CD4-positive, alpha-beta memory T cell (primary cell): ENCODE measurements at regions of chr3 and their contacts with region 1.

Region 1: GRCh38 chr3:152376351-152377183 is 107.8 kb downstream of the MBNL1 start:
- DNase-seq: no peak
- H3K4me3 ChIP-seq: no peak overlapping the region
- H3K4me3 Mint-ChIP-seq: peak overlapping the region in 4 of 8 donors; percentile 27 to 66 (median 42)
- H3K27ac ChIP-seq: no peak overlapping the region
- H3K27ac Mint-ChIP-seq: peak overlapping the region in 6 of 7 donors; percentile 6 to 86 (median 50)
- H3K4me1 ChIP-seq: peaks cover 90% of the 10 kb centered on the region
- H3K4me1 Mint-ChIP-seq: peaks cover 58 to 89% (median 70%) of the 10 kb centered on the region in 4 donors
- H3K27me3 ChIP-seq: no peaks in the 10 kb centered on the region
- H3K27me3 Mint-ChIP-seq: no peaks in the 10 kb centered on the region

Region 2: GRCh38 chr3:152331018-152331541 is 45.5 kb before region 1 on chr3:
- CTCF ChIA-PET with region 1: no interaction called
- POLR2A ChIA-PET with region 1: interaction called, 5 read pairs
- intact Hi-C with region 1: loop called (anchors 5 kb)
- DNase-seq: no peak
- H3K4me3 ChIP-seq: no peak overlapping the region
- H3K4me3 Mint-ChIP-seq: peak overlapping the region in 6 of 8 donors; percentile 20 to 76 (median 32)
- H3K27ac ChIP-seq: peak overlapping the region; percentile 28
- H3K27ac Mint-ChIP-seq: peak overlapping the region; percentile 35 to 92 (median 79)
- H3K4me1 ChIP-seq: peaks cover 96% of the 10 kb centered on the region
- H3K4me1 Mint-ChIP-seq: peaks cover 59 to 90% (median 75%) of the 10 kb centered on the region in 4 donors
- H3K27me3 ChIP-seq: no peaks in the 10 kb centered on the region
- H3K27me3 Mint-ChIP-seq: no peaks in the 10 kb centered on the region

Region 3: DNA sequence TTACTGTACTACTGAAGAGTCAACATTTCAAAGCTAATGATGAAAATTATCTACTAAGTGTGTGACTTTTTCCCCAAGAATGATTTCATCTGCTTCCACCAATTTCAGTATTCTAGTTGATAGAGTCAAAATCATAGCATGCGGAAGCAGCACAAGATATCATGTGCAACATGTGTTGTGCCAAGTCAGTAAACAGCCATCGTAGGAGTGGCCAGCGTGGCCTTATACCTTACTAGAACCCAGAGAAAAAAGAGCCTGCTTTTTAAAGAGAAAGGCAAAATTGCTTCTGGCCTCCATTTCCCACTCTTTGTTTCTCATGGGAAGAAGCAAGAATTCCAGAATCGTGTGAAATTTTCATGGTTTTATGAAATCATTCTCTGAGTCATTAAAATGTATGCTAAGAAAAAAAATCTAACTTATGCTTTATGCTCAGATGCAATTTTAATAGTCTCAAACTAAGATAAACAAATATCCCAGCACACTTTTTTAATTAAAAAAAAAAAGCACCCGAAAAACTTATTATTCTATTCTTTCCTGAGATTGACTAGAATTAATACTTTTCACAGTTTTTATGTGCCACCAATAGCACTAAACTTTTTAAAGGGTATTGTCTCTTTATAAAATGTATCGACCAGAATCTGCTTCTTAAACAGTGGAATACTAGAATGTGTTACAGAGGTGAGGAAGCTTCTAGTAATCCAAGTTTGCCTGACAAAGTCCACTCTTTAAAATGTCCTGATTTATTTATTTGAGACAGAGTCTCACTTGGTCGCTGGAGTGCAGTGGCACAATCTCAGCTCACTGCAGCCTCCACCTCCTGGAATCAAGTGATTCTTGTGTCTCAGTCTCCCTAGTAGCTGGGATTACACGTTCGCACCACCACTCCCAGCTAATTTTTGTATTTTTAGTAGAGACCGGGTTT is 20.6 kb before region 1 on chr3:
- CTCF ChIA-PET with region 1: no interaction called
- POLR2A ChIA-PET with region 1: interaction called, 6 read pairs
- intact Hi-C with region 1: loop called (anchors 2 kb)
- DNase-seq: no peak
- H3K4me3 ChIP-seq: no peak overlapping the region
- H3K4me3 Mint-ChIP-seq: peak overlapping the region in 2 of 8 donors; percentile 33 to 61
- H3K27ac ChIP-seq: no peak overlapping the region
- H3K27ac Mint-ChIP-seq: peak overlapping the region in 6 of 7 donors; percentile 28 to 70 (median 56)
- H3K4me1 ChIP-seq: peaks cover 80% of the 10 kb centered on the region
- H3K4me1 Mint-ChIP-seq: peaks cover 50 to 78% (median 66%) of the 10 kb centered on the region in 4 donors
- H3K27me3 ChIP-seq: no peaks in the 10 kb centered on the region
- H3K27me3 Mint-ChIP-seq: no peaks in the 10 kb centered on the region

Region 4: GRCh38 chr3:152390647-152391046 is 14.1 kb after region 1 on chr3:
- CTCF ChIA-PET with region 1: interaction called, 3 read pairs
- POLR2A ChIA-PET with region 1: interaction called, 4 read pairs
- intact Hi-C with region 1: loop called (anchors 2 kb)
- DNase-seq: no peak
- H3K4me3 ChIP-seq: no peak overlapping the region
- H3K4me3 Mint-ChIP-seq: peak overlapping the region in 1 of 8 donors; percentile 35
- H3K27ac ChIP-seq: no peak overlapping the region
- H3K27ac Mint-ChIP-seq: peak overlapping the region; percentile 0 to 83 (median 58)
- H3K4me1 ChIP-seq: peaks cover 71% of the 10 kb centered on the region
- H3K4me1 Mint-ChIP-seq: peaks cover 43 to 87% (median 64%) of the 10 kb centered on the region in 4 donors
- H3K27me3 ChIP-seq: no peaks in the 10 kb centered on the region
- H3K27me3 Mint-ChIP-seq: no peaks in the 10 kb centered on the region

Region 5: GRCh38 chr3:152416808-152417580 is 40.4 kb after region 1 on chr3:
- CTCF ChIA-PET with region 1: no interaction called
- POLR2A ChIA-PET with region 1: no interaction called
- intact Hi-C with region 1: no loop called
- DNase-seq: no peak
- H3K4me3 ChIP-seq: no peak overlapping the region
- H3K4me3 Mint-ChIP-seq: peak overlapping the region in 1 of 8 donors; percentile 21
- H3K27ac ChIP-seq: peak overlapping the region; percentile 2
- H3K27ac Mint-ChIP-seq: peak overlapping the region in 6 of 7 donors; percentile 23 to 59 (median 36)
- H3K4me1 ChIP-seq: peaks cover 62% of the 10 kb centered on the region
- H3K4me1 Mint-ChIP-seq: peaks cover 39 to 80% (median 62%) of the 10 kb centered on the region in 4 donors
- H3K27me3 ChIP-seq: no peaks in the 10 kb centered on the region
- H3K27me3 Mint-ChIP-seq: no peaks in the 10 kb centered on the region

Region 6: DNA sequence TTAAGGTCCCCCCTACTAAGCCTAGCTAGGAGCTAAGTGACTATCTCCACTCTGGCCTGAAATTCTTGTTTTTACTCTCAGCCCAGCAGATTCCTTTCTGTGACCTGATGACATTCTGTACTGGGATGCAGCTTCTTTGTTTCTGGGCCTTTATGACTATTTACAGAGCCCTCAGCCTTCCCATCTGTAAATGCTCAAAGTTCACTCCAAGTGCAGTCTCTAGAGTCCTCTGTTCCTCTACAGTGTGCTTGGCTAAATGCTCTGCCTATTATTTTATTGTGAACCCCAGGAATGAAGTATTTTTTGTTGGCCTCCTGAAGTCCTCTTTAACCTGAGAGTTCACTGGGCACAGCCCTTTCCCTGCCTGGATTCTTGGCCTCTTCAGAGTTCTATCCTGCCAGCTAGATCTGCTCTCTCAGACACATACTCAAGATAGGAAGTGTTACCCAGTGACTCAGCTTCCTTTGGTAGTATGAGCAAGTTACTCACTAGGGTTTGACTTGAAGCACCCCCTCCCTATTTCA is 180.2 kb after region 1 on chr3:
- CTCF ChIA-PET with region 1: no interaction called
- POLR2A ChIA-PET with region 1: no interaction called
- intact Hi-C with region 1: no loop called
- DNase-seq: no peak
- H3K4me3 ChIP-seq: no peak overlapping the region
- H3K4me3 Mint-ChIP-seq: no peak overlapping the region
- H3K27ac ChIP-seq: no peak overlapping the region
- H3K27ac Mint-ChIP-seq: no peak overlapping the region
- H3K4me1 ChIP-seq: no peaks in the 10 kb centered on the region
- H3K4me1 Mint-ChIP-seq: peaks cover 0 to 2% (median 0%) of the 10 kb centered on the region in 4 donors
- H3K27me3 ChIP-seq: no peaks in the 10 kb centered on the region
- H3K27me3 Mint-ChIP-seq: peaks cover 0 to 5% of the 10 kb centered on the region in 2 donors